Ascending aorta (tissue), 2 donors: ENCODE measurements at regions of chr6 and their contacts with region 1.

Region 1: GRCh38 chr6:159968440-159969203 is at the start of gene IGF2R:
- DNase-seq: peak; percentile 89 to 97
- H3K4me3 ChIP-seq: peak within 1 kb of the TSS; percentile 100
- H3K27ac ChIP-seq: peak within 1 kb of the TSS; percentile 86 to 90
- H3K4me1 ChIP-seq: peaks cover 0 to 15% of the 10 kb centered on the region in 2 donors
- H3K27me3 ChIP-seq: no peaks in the 10 kb centered on the region
- CTCF ChIP-seq: no peak
- total RNA-seq, gene IGF2R: 104 TPM

Region 2: GRCh38 chr6:159941286-159942113 is 27.1 kb before region 1 on chr6:
- intact Hi-C with region 1: loop called (anchors 1 kb)
- DNase-seq: no peak
- H3K4me3 ChIP-seq: no peak overlapping the region
- H3K27ac ChIP-seq: no peak overlapping the region
- H3K4me1 ChIP-seq: peaks cover 6 to 25% of the 10 kb centered on the region in 2 donors
- H3K27me3 ChIP-seq: no peaks in the 10 kb centered on the region
- CTCF ChIP-seq: peak; percentile 38 to 66 (median 53)

Region 3: GRCh38 chr6:160030103-160030502 is 61.5 kb after region 1 on chr6:
- intact Hi-C with region 1: loop called (anchors 2 kb)
- DNase-seq: peak in 1 of 2 donors; percentile 90
- H3K4me3 ChIP-seq: no peak overlapping the region
- H3K27ac ChIP-seq: peak overlapping the region; percentile 60 to 68
- H3K4me1 ChIP-seq: peaks cover 0 to 9% of the 10 kb centered on the region in 2 donors
- H3K27me3 ChIP-seq: no peaks in the 10 kb centered on the region
- CTCF ChIP-seq: no peak